ENCODE measurements at regions of chr4 and their contacts with region 1.

Region 1: GRCh38 chr4:57158221-57158620 is 48.0 kb upstream of the IGFBP7 start:
- DNase-seq: peak in 1 of 10 donors; percentile 40
- H3K4me3 ChIP-seq: peak overlapping the region in 4 of 59 donors; percentile 3 to 48 (median 22)
- H3K27ac ChIP-seq: peak overlapping the region in 22 of 59 donors; percentile 1 to 77 (median 54)
- H3K27me3 ChIP-seq: no peaks in the 10 kb centered on the region
- CTCF ChIP-seq: peak in 3 of 56 donors; percentile 6 to 23 (median 17)

Region 2: GRCh38 chr4:57037982-57038604 is 120.1 kb before region 1 on chr4:
- intact Hi-C with region 1: loop called in 1 of 2 experiments (anchors 5 kb)
- DNase-seq: peak; percentile 18 to 77 (median 61)
- H3K4me3 ChIP-seq: peak overlapping the region in 40 of 59 donors; percentile 2 to 51 (median 20)
- H3K27ac ChIP-seq: peak overlapping the region in 6 of 59 donors; percentile 5 to 29 (median 12)
- H3K27me3 ChIP-seq: no peaks in the 10 kb centered on the region
- CTCF ChIP-seq: peak; percentile 55 to 87 (median 76)